ENCODE measurements at regions of chr10 and their contacts with region 1.

Region 1: DNA sequence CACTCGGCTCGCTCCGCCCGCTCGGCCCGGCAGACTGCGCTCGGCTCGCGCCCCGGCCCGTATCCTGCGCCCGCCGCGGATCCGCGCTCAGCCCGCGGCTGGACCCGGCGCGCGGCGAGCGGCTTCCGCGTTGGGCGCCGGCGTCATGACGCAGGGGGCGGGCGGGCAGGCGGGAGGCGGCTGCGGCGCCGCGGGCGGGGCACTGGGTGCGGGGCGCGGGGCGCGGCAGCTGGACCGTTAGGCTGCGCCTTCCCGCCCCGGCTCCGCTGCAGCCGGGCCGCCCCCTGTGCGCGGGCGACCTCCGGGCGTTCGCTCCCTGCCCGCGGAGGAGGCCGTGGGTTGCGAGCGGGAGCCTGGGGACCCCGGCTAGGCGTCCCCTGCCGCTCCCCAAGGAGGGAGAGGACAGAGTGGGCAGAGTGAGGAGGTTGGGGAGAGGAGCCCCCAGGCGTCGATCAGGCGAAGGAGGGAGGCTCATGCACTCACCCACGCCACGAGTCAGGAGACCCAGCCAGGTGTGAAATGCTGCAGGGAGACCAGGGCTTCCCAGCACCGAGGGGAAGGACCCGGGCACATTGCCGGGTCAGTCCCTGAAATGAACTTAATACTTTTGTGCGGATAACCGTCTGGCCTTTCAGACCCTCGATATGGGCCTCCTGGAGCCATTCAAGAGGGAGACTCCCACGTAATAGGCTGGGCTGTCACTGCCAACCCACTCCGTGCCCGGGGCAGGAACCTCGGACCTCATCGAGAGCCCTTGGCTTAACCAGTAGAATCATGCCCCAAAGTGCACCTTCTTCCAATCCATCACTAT is at the start of gene PIP4K2A:
- DNase-seq: no peak
- H3K4me3 ChIP-seq: peak within 1 kb of the TSS; percentile 96 to 98
- H3K27ac ChIP-seq: peak within 1 kb of the TSS; percentile 85
- H3K4me1 ChIP-seq: peaks cover 24% of the 10 kb centered on the region
- H3K27me3 ChIP-seq: no peaks in the 10 kb centered on the region
- CTCF ChIP-seq: no peak
- POLR2A ChIP-seq: peak in 1 of 2 donors; percentile 34
- total RNA-seq, gene PIP4K2A: 20.6 TPM

Region 2: GRCh38 chr10:22554461-22555182 is 160.1 kb before region 1 on chr10:
- intact Hi-C with region 1: no loop called
- DNase-seq: no peak
- H3K4me3 ChIP-seq: peak overlapping the region; percentile 17 to 33
- H3K27ac ChIP-seq: peak overlapping the region; percentile 58
- H3K4me1 ChIP-seq: peaks cover 8% of the 10 kb centered on the region
- H3K27me3 ChIP-seq: no peaks in the 10 kb centered on the region
- CTCF ChIP-seq: no peak
- POLR2A ChIP-seq: no peak

Region 3: DNA sequence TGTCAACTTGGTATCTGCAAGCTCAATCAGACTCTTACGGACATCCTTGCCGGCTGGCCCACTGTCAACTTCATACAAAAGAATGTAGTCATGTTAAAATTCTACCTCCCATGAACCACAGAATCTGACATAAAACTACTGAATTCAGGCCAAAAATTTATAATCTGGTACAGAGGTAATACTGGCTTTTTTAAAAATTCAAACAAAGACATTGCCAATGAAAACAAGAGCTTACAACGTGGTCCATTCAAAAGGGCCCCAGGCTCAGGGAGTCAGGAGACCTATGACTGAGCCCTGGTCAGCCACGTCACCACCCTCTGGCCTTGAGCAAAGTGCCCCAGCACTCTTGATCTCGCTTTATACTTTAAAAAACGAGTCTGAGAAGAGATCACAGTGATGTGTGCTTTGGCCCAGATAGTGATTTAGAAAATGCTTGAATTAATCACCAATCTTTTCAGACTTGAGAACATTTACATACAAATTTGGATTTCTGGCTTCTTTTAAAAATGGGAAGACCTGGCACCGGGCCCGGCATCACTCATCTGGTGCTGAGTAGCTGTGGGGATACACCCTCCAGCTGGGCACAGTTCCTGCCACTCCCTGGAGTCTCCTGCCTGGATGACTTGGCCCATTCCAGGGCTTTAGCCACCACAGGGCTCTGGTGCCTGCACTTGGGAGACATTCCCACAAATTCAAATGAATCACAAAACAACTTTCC is 94.4 kb before region 1 on chr10:
- intact Hi-C with region 1: loop called (anchors 2 kb)
- DNase-seq: no peak
- H3K4me3 ChIP-seq: no peak overlapping the region
- H3K27ac ChIP-seq: peak overlapping the region; percentile 66
- H3K4me1 ChIP-seq: peaks cover 49% of the 10 kb centered on the region
- H3K27me3 ChIP-seq: no peaks in the 10 kb centered on the region
- CTCF ChIP-seq: no peak
- POLR2A ChIP-seq: no peak